ENCODE measurements at regions of chr5 and their contacts with region 1.

Region 1: GRCh38 chr5:113612060-113612496 is 98.6 kb downstream of the YTHDC2 start:
- DNase-seq: no peak
- H3K4me3 Mint-ChIP-seq: no peak overlapping the region
- H3K27ac Mint-ChIP-seq: no peak overlapping the region
- H3K4me1 Mint-ChIP-seq: peaks cover 3% of the 10 kb centered on the region
- H3K27me3 Mint-ChIP-seq: peaks cover 4% of the 10 kb centered on the region

Region 2: DNA sequence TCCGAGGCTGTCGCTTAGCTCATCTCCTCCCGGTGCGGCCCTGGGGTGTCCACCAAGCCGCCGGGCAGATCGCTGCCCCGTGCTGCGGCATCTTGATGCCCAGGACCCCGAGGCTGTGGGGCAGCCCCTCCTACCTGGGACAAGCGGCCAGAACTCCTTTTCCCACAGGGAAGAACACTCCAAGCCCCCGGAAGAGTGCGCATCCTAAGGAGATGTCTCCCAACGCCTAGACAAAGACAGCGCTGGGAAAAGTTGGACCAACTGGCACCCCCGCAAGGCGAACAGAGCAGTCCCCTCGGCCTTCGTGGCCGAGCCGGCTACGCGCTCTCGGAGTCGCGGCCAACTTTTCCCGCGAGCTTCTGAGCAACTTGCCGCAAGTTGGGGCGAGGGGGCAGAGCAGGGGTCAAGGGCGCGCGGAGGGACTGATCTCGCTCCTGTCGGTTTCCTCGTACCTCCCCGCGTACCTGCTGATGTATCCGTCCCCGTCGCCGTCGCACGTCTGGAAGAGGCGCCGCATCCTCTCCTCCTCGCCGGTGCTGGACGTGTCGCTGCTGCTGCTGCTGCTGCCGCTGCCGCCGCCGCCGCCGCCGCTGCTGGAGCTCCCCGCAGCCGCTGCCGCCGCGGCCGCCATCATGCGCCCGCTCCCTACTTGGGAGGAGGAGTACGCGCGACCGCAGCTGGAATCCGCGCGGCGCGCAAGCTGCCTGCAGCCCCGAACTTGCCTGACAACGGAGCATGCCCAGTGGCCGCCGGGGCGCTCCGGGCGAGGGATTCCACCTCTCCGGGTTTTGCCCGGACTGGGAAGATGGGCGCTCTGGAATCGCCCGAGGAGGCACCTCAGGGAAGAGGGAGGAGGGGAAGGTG is 124.1 kb before region 1 on chr5 and contains the start of gene MCC:
- CTCF ChIA-PET with region 1: no interaction called
- intact Hi-C with region 1: no loop called
- DNase-seq: peak; percentile 49
- H3K4me3 Mint-ChIP-seq: peak within 1 kb of the TSS; percentile 75
- H3K27ac Mint-ChIP-seq: no peak within 1 kb of the TSS
- H3K4me1 Mint-ChIP-seq: peaks cover 9% of the 10 kb centered on the region
- H3K27me3 Mint-ChIP-seq: peaks cover 62% of the 10 kb centered on the region
- total RNA-seq, gene MCC: 0.62 to 0.81 TPM

Region 3: GRCh38 chr5:113598926-113599325 is 13.2 kb before region 1 on chr5:
- CTCF ChIA-PET with region 1: interaction called, 11 read pairs
- intact Hi-C with region 1: no loop called
- DNase-seq: no peak
- H3K4me3 Mint-ChIP-seq: no peak overlapping the region
- H3K27ac Mint-ChIP-seq: no peak overlapping the region
- H3K4me1 Mint-ChIP-seq: no peaks in the 10 kb centered on the region
- H3K27me3 Mint-ChIP-seq: no peaks in the 10 kb centered on the region

Region 4: DNA sequence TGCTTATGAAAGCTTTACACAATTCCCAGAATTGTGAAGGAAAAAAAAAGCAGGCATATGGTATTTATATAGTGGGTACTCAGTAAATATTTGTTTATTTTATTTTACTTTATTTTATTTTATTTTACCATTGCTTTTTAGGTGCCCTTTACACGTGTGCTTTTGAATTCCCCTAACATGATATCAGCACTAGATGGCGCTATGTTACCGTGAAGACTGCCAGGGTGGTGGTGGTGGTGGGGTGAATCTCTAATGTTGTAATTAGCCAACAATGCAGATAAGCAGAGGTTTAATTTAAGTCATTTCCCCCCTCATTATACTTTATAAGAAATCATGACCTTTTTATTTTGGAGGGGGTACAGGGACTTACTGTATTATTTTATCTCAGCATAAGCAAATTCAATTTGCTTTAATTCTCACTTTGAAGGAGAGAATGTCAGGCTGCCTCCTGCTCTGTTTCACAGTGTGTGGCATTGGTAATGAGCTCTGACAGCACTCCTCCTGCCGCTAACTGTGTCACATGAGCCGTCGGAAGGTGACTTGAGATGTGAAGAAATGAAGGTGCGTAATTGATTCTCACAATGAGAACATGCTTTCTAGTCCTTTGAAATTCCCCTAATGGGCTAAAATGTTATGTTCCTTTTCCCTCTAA is 67.0 kb after region 1 on chr5:
- CTCF ChIA-PET with region 1: interaction called, 3 read pairs
- intact Hi-C with region 1: loop called (anchors 5 kb)
- DNase-seq: peak; percentile 56
- H3K4me3 Mint-ChIP-seq: no peak overlapping the region
- H3K27ac Mint-ChIP-seq: no peak overlapping the region
- H3K4me1 Mint-ChIP-seq: no peaks in the 10 kb centered on the region
- H3K27me3 Mint-ChIP-seq: no peaks in the 10 kb centered on the region

Region 5: GRCh38 chr5:114449860-114450421 is 837.9 kb after region 1 on chr5:
- CTCF ChIA-PET with region 1: interaction called, 9 read pairs
- intact Hi-C with region 1: loop called (anchors 1 kb)
- DNase-seq: peak; percentile 68
- H3K4me3 Mint-ChIP-seq: no peak overlapping the region
- H3K27ac Mint-ChIP-seq: no peak overlapping the region
- H3K4me1 Mint-ChIP-seq: peaks cover 4% of the 10 kb centered on the region
- H3K27me3 Mint-ChIP-seq: peaks cover 3% of the 10 kb centered on the region

Region 6: DNA sequence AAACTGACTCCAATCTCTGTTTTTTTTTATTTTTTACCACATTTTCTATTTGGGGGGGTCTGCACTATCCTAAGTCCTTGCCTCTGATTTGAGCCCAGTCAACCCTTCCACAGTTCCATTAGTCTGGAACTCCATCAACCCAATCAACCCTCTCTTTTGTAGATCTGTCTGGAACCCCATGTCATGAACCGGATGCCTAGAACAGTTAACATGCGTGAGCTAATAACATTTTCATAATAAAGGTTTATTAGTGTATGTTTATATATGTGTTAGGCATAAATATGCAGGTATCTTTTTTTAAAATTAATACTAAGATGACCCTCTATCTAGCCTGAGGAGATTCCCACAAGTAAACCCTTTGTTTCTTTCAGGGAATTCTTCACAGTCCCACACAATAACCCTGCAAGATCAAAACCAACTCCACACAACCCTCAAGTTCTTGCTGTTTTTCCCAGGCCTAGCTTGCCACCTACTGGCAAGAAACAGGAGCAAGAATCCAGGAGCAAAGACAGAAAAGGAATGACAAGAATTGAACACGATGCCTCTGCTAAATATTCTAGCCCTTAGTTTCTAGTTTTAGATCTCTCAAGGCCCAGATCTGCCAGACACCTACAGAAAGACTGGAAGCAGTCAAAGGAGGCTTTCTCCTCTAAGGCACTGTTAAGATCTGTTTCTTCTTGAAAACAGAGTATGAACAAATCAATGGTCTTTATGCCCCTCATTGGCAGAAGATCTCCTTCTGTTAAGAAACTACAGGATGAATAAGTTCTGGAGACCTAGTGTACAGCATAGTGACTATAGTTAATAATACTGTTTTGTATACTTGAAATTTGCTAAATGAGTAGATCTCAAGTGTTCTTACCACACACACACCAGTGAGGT is 1457.2 kb after region 1 on chr5:
- CTCF ChIA-PET with region 1: interaction called, 4 read pairs
- intact Hi-C with region 1: loop called (anchors 1 kb)
- DNase-seq: peak; percentile 49
- H3K4me3 Mint-ChIP-seq: no peak overlapping the region
- H3K27ac Mint-ChIP-seq: peak overlapping the region; percentile 33
- H3K4me1 Mint-ChIP-seq: peaks cover 10% of the 10 kb centered on the region
- H3K27me3 Mint-ChIP-seq: peaks cover 14% of the 10 kb centered on the region

Region 7: GRCh38 chr5:115586601-115587048 is 1974.5 kb after region 1 on chr5:
- CTCF ChIA-PET with region 1: no interaction called
- intact Hi-C with region 1: loop called (anchors 10 kb)
- DNase-seq: no peak
- H3K4me3 Mint-ChIP-seq: no peak overlapping the region
- H3K27ac Mint-ChIP-seq: no peak overlapping the region
- H3K4me1 Mint-ChIP-seq: no peaks in the 10 kb centered on the region
- H3K27me3 Mint-ChIP-seq: no peaks in the 10 kb centered on the region

Measured in activated naive CD4-positive, alpha-beta T cell treated with anti-CD3 and anti-CD28 coated beads for 36 hours (primary cell).